A673 (cell line): ENCODE measurements at regions of chr6 and their contacts with region 1.

Region 1: GRCh38 chr6:81752138-81752920 is at the start of gene TENT5A:
- DNase-seq: peak; percentile 94
- H3K4me3 ChIP-seq: peak within 1 kb of the TSS; percentile 68
- H3K27ac ChIP-seq: peak within 1 kb of the TSS; percentile 82
- H3K4me1 ChIP-seq: peaks cover 23% of the 10 kb centered on the region
- H3K27me3 ChIP-seq: no peaks in the 10 kb centered on the region
- CTCF ChIP-seq: peak; percentile 46
- total RNA-seq, gene TENT5A: 36.9 and 37.1 TPM in 2 replicates

Region 2: DNA sequence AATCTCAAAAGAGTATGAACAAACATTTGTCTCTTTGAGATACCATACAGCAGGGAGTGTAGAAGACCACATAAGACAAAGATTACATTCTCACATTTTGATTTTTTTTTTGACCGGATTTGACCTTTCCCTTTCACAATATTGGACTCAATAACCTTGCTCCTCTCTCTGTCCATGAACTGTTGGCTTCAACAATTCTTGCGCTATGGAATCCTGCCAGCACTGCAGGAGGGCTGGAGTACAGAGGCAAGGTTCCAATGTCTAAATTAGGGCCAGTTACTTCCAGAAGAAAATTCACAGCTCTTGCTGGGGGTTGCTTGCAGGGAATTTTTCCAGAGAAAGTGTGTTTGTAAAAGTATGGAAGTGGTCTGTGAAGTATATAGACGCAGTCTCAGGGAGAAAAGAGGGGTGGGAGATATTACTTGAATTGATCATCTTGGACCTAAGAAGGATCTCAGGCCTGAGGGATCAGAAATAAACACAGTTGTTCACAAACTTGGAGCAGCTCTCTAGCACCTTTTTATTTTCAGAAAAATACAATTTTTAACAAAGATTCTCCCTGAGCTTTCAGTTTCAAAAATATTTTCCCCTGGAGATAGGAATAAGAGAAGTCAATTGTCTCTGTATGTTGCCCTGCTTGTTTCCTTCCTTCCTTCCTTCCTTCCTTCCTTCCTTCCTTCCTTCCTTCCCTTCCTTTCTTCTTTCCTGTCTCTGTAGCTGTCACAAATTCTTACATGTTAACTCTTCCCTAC is 880.0 kb before region 1 on chr6:
- CTCF ChIA-PET with region 1: no interaction called
- POLR2A ChIA-PET with region 1: no interaction called
- intact Hi-C with region 1: loop called (anchors 2 kb)
- DNase-seq: peak; percentile 88
- H3K4me3 ChIP-seq: no peak overlapping the region
- H3K27ac ChIP-seq: peak overlapping the region; percentile 95
- H3K4me1 ChIP-seq: peaks cover 17% of the 10 kb centered on the region
- H3K27me3 ChIP-seq: no peaks in the 10 kb centered on the region
- CTCF ChIP-seq: no peak

Region 3: GRCh38 chr6:81067057-81067456 is 685.3 kb before region 1 on chr6:
- CTCF ChIA-PET with region 1: no interaction called
- POLR2A ChIA-PET with region 1: no interaction called
- intact Hi-C with region 1: loop called (anchors 5 kb)
- DNase-seq: peak; percentile 96
- H3K4me3 ChIP-seq: no peak overlapping the region
- H3K27ac ChIP-seq: no peak overlapping the region
- H3K4me1 ChIP-seq: peaks cover 31% of the 10 kb centered on the region
- H3K27me3 ChIP-seq: peaks cover 22% of the 10 kb centered on the region
- CTCF ChIP-seq: no peak

Region 4: DNA sequence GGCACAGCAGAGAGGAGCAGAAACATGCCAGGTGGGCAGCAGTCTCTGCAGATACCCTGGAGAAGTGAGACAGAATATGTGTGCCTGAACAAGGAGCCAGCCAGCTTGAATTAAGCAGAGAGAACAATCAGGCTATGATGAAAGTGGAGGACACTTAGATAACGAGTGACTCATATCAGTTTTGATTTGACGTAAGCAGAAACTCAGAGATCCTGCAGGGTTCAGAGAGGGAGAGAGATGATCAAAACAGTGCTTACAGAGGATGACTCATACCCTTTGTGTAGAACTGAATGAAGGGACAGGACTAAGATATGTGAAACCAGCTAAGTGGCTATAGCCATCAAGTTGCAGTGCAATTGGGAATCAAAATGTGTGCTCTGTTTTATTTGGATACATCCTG is 300.5 kb before region 1 on chr6:
- CTCF ChIA-PET with region 1: no interaction called
- POLR2A ChIA-PET with region 1: no interaction called
- intact Hi-C with region 1: loop called (anchors 5 kb)
- DNase-seq: peak; percentile 87
- H3K4me3 ChIP-seq: no peak overlapping the region
- H3K27ac ChIP-seq: peak overlapping the region; percentile 26
- H3K4me1 ChIP-seq: peaks cover 5% of the 10 kb centered on the region
- H3K27me3 ChIP-seq: no peaks in the 10 kb centered on the region
- CTCF ChIP-seq: no peak

Region 5: GRCh38 chr6:81547149-81547548 is 205.2 kb before region 1 on chr6:
- CTCF ChIA-PET with region 1: no interaction called
- POLR2A ChIA-PET with region 1: no interaction called
- intact Hi-C with region 1: no loop called
- DNase-seq: no peak
- H3K4me3 ChIP-seq: no peak overlapping the region
- H3K27ac ChIP-seq: no peak overlapping the region
- H3K4me1 ChIP-seq: no peaks in the 10 kb centered on the region
- H3K27me3 ChIP-seq: no peaks in the 10 kb centered on the region
- CTCF ChIP-seq: no peak

Region 6: GRCh38 chr6:81793821-81794475 is 41.6 kb after region 1 on chr6:
- CTCF ChIA-PET with region 1: interaction called, 10 read pairs
- POLR2A ChIA-PET with region 1: no interaction called
- intact Hi-C with region 1: no loop called
- DNase-seq: peak; percentile 65
- H3K4me3 ChIP-seq: no peak overlapping the region
- H3K27ac ChIP-seq: no peak overlapping the region
- H3K4me1 ChIP-seq: peaks cover 27% of the 10 kb centered on the region
- H3K27me3 ChIP-seq: no peaks in the 10 kb centered on the region
- CTCF ChIP-seq: no peak